Body of pancreas (tissue), 4 donors: ENCODE measurements at regions of chr7 and their contacts with region 1.

Region 1: GRCh38 chr7:21261627-21262594 is 166.0 kb upstream of the SP4 start:
- DNase-seq: peak; percentile 16 to 46 (median 29)
- ATAC-seq: no peak
- H3K4me3 ChIP-seq: no peak overlapping the region
- H3K27ac ChIP-seq: no peak overlapping the region
- H3K4me1 ChIP-seq: no peaks in the 10 kb centered on the region
- H3K27me3 ChIP-seq: no peaks in the 10 kb centered on the region
- CTCF ChIP-seq: peak in 6 of 7 experiments; percentile 24 to 46 (median 38)
- POLR2A ChIP-seq: no peak

Region 2: GRCh38 chr7:21507626-21508343 is 245.9 kb after region 1 on chr7:
- intact Hi-C with region 1: loop called (anchors 10 kb)
- DNase-seq: peak; percentile 51 to 63 (median 60)
- ATAC-seq: peak; percentile 72
- H3K4me3 ChIP-seq: no peak overlapping the region
- H3K27ac ChIP-seq: no peak overlapping the region
- H3K4me1 ChIP-seq: peaks cover 7% of the 10 kb centered on the region
- H3K27me3 ChIP-seq: no peaks in the 10 kb centered on the region
- CTCF ChIP-seq: peak in 6 of 7 experiments; percentile 52 to 79 (median 72)
- POLR2A ChIP-seq: no peak